T-cell (primary cell): ENCODE measurements at regions of chr17 and their contacts with region 1.

Region 1: DNA sequence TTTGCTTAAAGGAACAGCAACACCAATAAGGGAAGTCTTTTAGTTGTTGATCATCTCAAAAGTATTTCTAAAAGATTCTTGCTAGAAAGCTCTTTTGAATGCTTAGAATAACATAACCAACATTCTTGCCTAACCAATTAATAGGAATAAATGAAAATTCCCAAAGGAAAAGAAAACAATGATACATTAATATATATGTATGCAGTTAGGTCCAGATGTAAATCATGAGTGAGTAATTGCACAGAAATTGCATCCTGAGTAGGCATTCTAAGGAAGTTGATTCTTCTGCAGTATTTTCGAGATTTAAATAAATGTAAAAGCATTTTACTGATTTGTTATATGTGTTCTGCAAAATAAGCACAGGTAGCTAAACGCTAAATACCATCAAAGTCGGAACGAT is 22.1 kb downstream of the COX10 start:
- DNase-seq: no peak
- ATAC-seq: no peak
- H3K4me3 ChIP-seq: no peak overlapping the region
- H3K4me3 Mint-ChIP-seq: no peak overlapping the region
- H3K27ac ChIP-seq: no peak overlapping the region
- H3K27ac Mint-ChIP-seq: no peak overlapping the region
- H3K4me1 ChIP-seq: no peaks in the 10 kb centered on the region
- H3K4me1 Mint-ChIP-seq: peaks cover 63 to 80% (median 68%) of the 10 kb centered on the region in 3 donors
- H3K27me3 ChIP-seq: no peaks in the 10 kb centered on the region
- H3K27me3 Mint-ChIP-seq: no peaks in the 10 kb centered on the region

Region 2: GRCh38 chr17:14294876-14295275 is 203.5 kb after region 1 on chr17:
- CTCF ChIA-PET with region 1: no interaction called
- POLR2A ChIA-PET with region 1: interaction called in 1 of 2 experiments, 10 read pairs
- DNase-seq: no peak
- ATAC-seq: no peak
- H3K4me3 ChIP-seq: no peak overlapping the region
- H3K4me3 Mint-ChIP-seq: no peak overlapping the region
- H3K27ac ChIP-seq: no peak overlapping the region
- H3K27ac Mint-ChIP-seq: no peak overlapping the region
- H3K4me1 ChIP-seq: peaks cover 10 to 35% of the 10 kb centered on the region in 2 experiments
- H3K4me1 Mint-ChIP-seq: peaks cover 36 to 43% (median 40%) of the 10 kb centered on the region in 3 donors
- H3K27me3 ChIP-seq: peaks cover 9 to 53% of the 10 kb centered on the region in 2 experiments
- H3K27me3 Mint-ChIP-seq: peaks cover 55 to 68% of the 10 kb centered on the region in 2 donors